GM12878 (cell line): ENCODE measurements at regions of chr4 and their contacts with region 1.

Region 1: GRCh38 chr4:141133146-141133998 is at the start of gene RNF150:
- DNase-seq: peak; percentile 9
- ATAC-seq: peak; percentile 81
- H3K4me3 ChIP-seq: peak within 1 kb of the TSS; percentile 36; the same call in 1 of the 2 replicates
- H3K27ac ChIP-seq: no peak within 1 kb of the TSS
- H3K4me1 ChIP-seq: no peaks in the 10 kb centered on the region
- H3K27me3 ChIP-seq: peaks cover 6 to 15% of the 10 kb centered on the region in 2 experiments
- CTCF ChIP-seq: peak; percentile 36 to 59 (median 45); a peak in 4 of 6 replicates
- EP300 ChIP-seq: no peak
- POLR2A ChIP-seq: no peak
- RAD21 ChIP-seq: peak; percentile 59
- polyA plus RNA-seq, gene RNF150: not detected

Region 2: GRCh38 chr4:140930557-140930956 is 202.8 kb before region 1 on chr4:
- CTCF ChIA-PET with region 1: no interaction called
- POLR2A ChIA-PET with region 1: no interaction called
- RAD21 ChIA-PET with region 1: no interaction called
- SMC1A ChIA-PET with region 1: no interaction called
- in situ Hi-C with region 1: no loop called
- intact Hi-C with region 1: loop called (anchors 5 kb)
- DNase-seq: no peak
- ATAC-seq: no peak
- H3K4me3 ChIP-seq: no peak overlapping the region
- H3K27ac ChIP-seq: no peak overlapping the region
- H3K4me1 ChIP-seq: no peaks in the 10 kb centered on the region
- H3K27me3 ChIP-seq: no peaks in the 10 kb centered on the region; a peak in 1 of 4 replicates
- CTCF ChIP-seq: no peak
- EP300 ChIP-seq: no peak
- POLR2A ChIP-seq: no peak
- RAD21 ChIP-seq: no peak

Region 3: DNA sequence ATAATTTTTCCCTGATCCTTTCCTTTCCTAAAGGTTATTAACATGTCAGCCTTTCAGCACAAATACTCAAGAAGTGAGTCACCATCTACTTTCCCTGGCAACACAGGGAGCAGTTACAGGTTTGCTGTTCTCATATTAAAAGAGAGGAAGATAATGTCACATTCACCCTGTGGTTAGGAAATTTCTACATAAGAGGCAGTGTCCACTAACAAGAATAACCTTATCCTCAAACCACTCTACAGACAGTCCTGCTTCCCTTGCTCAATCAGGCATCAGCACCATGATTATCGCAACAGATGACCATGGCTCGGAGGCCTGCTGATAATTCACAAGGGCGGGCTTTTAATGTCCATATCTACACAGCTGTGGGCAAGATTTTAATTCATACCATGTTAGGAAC is 31.0 kb before region 1 on chr4:
- CTCF ChIA-PET with region 1: no interaction called
- POLR2A ChIA-PET with region 1: no interaction called
- RAD21 ChIA-PET with region 1: no interaction called
- SMC1A ChIA-PET with region 1: no interaction called
- in situ Hi-C with region 1: no loop called
- intact Hi-C with region 1: no loop called
- DNase-seq: no peak
- ATAC-seq: no peak
- H3K4me3 ChIP-seq: no peak overlapping the region
- H3K27ac ChIP-seq: no peak overlapping the region
- H3K4me1 ChIP-seq: no peaks in the 10 kb centered on the region
- H3K27me3 ChIP-seq: no peaks in the 10 kb centered on the region
- CTCF ChIP-seq: no peak
- EP300 ChIP-seq: no peak
- POLR2A ChIP-seq: no peak
- RAD21 ChIP-seq: no peak

Region 4: DNA sequence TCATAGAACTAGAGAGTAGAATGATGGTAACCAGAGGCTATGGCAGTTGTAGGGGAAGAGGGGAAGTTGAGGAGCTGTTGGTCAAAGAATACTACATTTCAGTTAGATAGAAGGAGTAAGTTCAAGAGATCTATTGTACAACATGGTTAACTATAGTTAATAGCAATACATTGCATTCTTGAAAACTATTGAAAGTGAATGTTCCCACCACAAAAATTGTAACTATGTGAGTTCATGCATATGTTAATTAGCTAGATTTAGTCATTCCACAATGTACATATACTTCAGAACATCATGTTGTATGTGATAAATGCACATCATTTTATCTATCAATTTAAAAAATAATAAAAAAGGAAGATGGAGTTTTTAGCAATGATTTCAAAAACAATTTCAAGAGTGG is 377.7 kb after region 1 on chr4:
- CTCF ChIA-PET with region 1: no interaction called
- POLR2A ChIA-PET with region 1: no interaction called
- RAD21 ChIA-PET with region 1: no interaction called
- SMC1A ChIA-PET with region 1: no interaction called
- in situ Hi-C with region 1: no loop called
- intact Hi-C with region 1: no loop called
- DNase-seq: no peak
- ATAC-seq: no peak
- H3K4me3 ChIP-seq: no peak overlapping the region
- H3K27ac ChIP-seq: no peak overlapping the region
- H3K4me1 ChIP-seq: no peaks in the 10 kb centered on the region
- H3K27me3 ChIP-seq: no peaks in the 10 kb centered on the region
- CTCF ChIP-seq: no peak
- EP300 ChIP-seq: no peak
- POLR2A ChIP-seq: no peak
- RAD21 ChIP-seq: no peak